HAP-1 (cell line): ENCODE measurements at regions of chr3 and their contacts with region 1.

Region 1: GRCh38 chr3:115217678-115218451 is 70.8 kb upstream of the ZBTB20 start:
- DNase-seq: peak; percentile 74 to 79
- H3K4me3 ChIP-seq: no peak overlapping the region
- H3K4me1 ChIP-seq: peaks cover 11% of the 10 kb centered on the region
- H3K27me3 ChIP-seq: no peaks in the 10 kb centered on the region

Region 2: GRCh38 chr3:114608293-114608692 is 609.6 kb before region 1 on chr3:
- in situ Hi-C with region 1: no loop called
- DNase-seq: no peak
- H3K4me3 ChIP-seq: no peak overlapping the region
- H3K4me1 ChIP-seq: no peaks in the 10 kb centered on the region
- H3K27me3 ChIP-seq: no peaks in the 10 kb centered on the region

Region 3: DNA sequence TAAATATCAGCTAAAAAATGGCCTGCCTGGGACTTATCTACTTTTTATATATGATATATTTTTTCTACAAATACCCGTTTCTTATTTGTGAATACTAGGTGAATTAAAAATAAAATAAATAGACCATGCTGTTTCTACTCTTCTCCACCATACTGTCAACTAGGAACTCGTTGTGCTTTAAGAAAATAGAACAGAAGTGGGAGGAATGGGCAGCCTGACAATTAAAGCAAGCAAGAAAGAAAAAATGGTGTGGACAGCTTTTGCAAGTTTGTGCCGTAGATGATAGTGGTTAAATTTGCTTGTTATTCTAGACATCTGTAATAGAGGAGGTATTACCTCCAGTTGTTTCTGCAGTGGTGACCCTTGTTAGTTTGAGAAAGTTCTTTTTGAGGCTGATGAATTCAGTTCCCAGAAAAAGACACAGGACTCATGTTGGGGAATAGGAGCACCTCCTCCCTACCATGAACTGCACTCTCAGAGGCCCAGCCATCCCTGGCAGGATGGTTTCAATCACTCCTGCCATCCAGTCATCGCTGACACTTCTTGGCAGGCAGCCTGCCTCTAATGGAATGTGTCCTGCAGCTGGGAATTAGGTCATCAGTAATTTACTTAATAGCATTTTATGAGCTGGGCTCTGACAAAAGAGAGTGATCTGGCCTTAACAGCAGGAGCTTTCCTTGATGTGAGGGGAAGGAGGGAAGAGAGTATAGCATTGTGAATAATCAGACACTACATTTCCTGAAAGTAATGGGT is 300.4 kb after region 1 on chr3:
- in situ Hi-C with region 1: no loop called
- DNase-seq: peak; percentile 13 to 50
- H3K4me3 ChIP-seq: no peak overlapping the region
- H3K4me1 ChIP-seq: peaks cover 3% of the 10 kb centered on the region
- H3K27me3 ChIP-seq: no peaks in the 10 kb centered on the region

Region 4: GRCh38 chr3:115537669-115538068 is 319.8 kb after region 1 on chr3:
- in situ Hi-C with region 1: no loop called
- DNase-seq: no peak
- H3K4me3 ChIP-seq: no peak overlapping the region
- H3K4me1 ChIP-seq: no peaks in the 10 kb centered on the region
- H3K27me3 ChIP-seq: peaks cover 2% of the 10 kb centered on the region; the same call in 1 of the 2 replicates

Region 5: GRCh38 chr3:115692887-115693524 is 475.1 kb after region 1 on chr3:
- in situ Hi-C with region 1: loop called (anchors 5 kb)
- DNase-seq: peak; percentile 76 to 87
- H3K4me3 ChIP-seq: no peak overlapping the region
- H3K4me1 ChIP-seq: peaks cover 2% of the 10 kb centered on the region; the same call in 1 of the 2 replicates
- H3K27me3 ChIP-seq: no peaks in the 10 kb centered on the region

Region 6: GRCh38 chr3:115819785-115820384 is 602.0 kb after region 1 on chr3:
- in situ Hi-C with region 1: loop called (anchors 25 kb)
- DNase-seq: peak; percentile 78 to 88
- H3K4me3 ChIP-seq: no peak overlapping the region
- H3K4me1 ChIP-seq: peaks cover 4% of the 10 kb centered on the region; the same call in 1 of the 2 replicates
- H3K27me3 ChIP-seq: no peaks in the 10 kb centered on the region